Activated T-helper 1 cell treated with anti-CD3 and anti-CD28 coated beads, Interleukin-12 subunit alpha, Interleukin-12 subunit beta, Interleukin-2, Interleukin-4 antibody, amounts not matched to agents 30 ng/mL and 10 ng/mL and 1 ng/mL, durations not matched to agents 14 hours and 24 hours and 36 hours (primary cell): ENCODE measurements at regions of chr19 and their contacts with region 1.

Region 1: DNA sequence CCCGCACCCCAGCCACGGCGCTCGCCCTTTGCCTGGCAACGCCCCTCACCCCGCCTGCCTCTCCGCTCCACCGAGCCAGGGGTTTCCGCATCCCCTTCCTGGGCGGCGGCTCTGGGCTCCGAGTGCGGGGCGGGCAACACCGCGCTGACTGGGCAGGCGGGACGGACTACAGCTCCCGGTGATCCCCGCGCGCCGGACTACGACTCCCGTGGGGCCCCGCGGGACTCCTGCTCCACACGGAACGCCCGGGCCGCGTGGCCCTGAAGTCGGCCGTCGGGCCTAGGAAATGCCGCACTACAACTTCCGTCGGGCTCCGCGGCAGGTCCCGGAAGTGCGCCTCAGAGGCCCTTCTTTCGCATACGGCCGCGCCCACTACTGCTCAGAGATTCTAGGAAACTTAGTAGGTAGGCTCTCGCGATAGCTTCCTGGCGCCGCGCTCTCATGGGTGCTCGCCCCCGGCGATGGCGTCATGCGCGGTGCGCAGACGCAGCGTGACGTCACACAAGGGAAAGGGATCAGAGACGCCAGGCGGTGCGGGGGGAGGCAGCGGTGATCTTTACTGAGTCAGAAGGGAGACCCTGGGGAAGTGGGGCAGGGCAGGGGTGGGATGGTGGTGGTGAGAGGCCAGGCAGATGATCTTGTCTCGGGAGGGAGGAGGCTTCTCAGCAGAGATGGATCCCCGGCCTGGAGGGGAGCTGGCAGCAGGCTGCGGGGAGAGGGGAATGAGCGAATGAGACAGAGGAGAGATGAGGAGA is at the start of gene JOSD2:
- DNase-seq: peak; percentile 97
- H3K4me3 Mint-ChIP-seq: peak within 1 kb of the TSS; percentile 96
- H3K27ac Mint-ChIP-seq: peak within 1 kb of the TSS; percentile 99
- H3K4me1 Mint-ChIP-seq: peaks cover 18% of the 10 kb centered on the region
- H3K27me3 Mint-ChIP-seq: peaks cover 10% of the 10 kb centered on the region
- total RNA-seq, gene JOSD2: 38.5 and 41.7 TPM in 2 replicates

Region 2: GRCh38 chr19:50376166-50377050 is 134.8 kb before region 1 on chr19 and contains the start of gene NR1H2:
- intact Hi-C with region 1: loop called (anchors 1 kb)
- DNase-seq: peak; percentile 93
- H3K4me3 Mint-ChIP-seq: peak within 1 kb of the TSS; percentile 100
- H3K27ac Mint-ChIP-seq: peak within 1 kb of the TSS; percentile 99
- H3K4me1 Mint-ChIP-seq: peaks cover 27% of the 10 kb centered on the region
- H3K27me3 Mint-ChIP-seq: no peaks in the 10 kb centered on the region
- total RNA-seq, gene NR1H2: 84.3 and 84.8 TPM in 2 replicates

Region 3: DNA sequence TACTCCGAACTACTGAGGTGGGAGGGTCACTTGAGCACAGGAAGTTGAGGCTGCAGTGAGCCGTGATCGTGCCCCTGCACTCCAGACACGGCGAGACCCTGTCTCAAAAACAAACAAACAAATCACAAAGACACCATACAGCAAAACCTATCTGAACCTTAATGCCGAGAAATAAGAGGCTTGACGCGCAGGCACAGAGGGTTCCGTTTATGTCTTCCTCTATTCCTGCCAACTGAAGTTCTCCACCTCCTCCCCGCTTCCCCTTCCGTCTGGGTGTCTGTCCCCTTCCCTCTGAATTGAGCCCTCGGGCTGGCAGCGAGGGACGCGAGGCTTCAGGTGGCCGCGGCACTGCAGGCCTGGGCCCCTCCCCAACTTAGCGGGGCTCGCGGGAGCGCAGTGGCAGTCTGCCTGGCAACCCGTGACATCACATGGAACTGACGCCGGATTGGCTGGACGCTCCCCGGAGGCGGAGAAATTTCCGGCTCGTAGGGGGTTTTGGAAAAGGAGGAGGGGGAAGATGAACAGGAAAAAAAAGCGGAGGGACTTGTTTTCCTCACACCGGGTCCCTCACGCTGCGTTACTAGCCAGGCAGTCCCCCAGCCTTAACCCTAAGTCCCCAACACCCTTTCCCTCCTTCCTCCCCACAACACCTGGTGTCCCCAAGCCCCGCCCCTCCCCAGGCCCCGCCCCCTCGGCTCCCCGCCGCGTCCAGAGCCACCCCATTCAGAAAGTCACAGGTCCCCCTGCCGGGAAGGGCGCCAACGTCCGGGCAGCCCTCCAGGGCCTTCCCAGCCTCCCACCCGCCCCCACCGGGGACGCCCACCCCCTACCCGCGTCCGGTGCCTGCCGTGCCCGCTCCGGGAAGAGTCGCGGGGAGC is 79.7 kb before region 1 on chr19:
- intact Hi-C with region 1: loop called (anchors 2 kb)
- DNase-seq: peak; percentile 88
- H3K4me3 Mint-ChIP-seq: peak overlapping the region; percentile 89
- H3K27ac Mint-ChIP-seq: peak overlapping the region; percentile 93
- H3K4me1 Mint-ChIP-seq: peaks cover 12% of the 10 kb centered on the region
- H3K27me3 Mint-ChIP-seq: peaks cover 13% of the 10 kb centered on the region

Region 4: GRCh38 chr19:50657712-50658440 is 146.6 kb after region 1 on chr19:
- intact Hi-C with region 1: loop called (anchors 1 kb)
- DNase-seq: peak; percentile 69
- H3K4me3 Mint-ChIP-seq: peak overlapping the region; percentile 78
- H3K27ac Mint-ChIP-seq: peak overlapping the region; percentile 87
- H3K4me1 Mint-ChIP-seq: peaks cover 15% of the 10 kb centered on the region
- H3K27me3 Mint-ChIP-seq: peaks cover 24% of the 10 kb centered on the region

Region 5: DNA sequence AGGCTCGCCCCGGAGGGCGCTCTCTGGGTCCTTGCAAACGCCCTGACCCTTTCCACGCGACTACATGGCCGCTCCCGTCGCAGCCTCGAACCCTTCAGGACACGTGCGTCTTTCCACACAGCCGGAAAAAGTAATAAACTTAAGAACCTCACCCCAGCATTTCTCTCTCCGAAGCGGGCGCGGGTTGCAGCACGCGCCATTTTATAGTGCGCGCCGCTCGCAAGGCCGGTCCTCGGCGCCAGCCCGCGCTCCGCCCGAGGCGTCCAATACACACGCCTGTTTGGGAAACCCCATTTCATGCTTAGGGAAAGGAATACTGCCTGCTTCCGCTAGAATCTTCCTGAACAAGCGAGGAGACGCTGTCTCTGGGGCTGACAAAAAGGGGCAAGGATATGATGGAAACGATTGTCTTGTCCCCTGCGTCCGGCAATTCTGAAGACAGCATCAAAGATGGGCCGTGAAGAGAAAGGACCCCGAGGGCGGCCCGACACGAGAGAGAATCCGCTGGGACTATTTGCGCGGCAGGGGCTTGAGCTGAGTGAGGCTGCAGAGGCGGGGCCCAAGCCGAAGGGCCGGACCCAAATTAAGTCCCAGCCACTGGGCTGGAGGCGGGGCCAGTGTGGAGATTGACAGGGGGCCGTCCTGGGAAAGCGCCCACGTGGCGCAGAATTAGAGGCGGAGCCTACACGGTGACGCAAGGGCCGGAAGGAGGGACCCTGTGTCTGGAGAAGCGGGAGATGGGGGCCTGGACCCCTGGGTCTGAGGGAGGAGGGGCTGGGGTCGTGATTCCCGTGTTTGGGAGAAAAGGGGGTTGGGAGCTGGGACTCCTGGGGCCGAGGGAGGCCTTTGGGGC is 293.4 kb after region 1 on chr19:
- intact Hi-C with region 1: loop called (anchors 1 kb)
- DNase-seq: peak; percentile 97
- H3K4me3 Mint-ChIP-seq: peak overlapping the region; percentile 96
- H3K27ac Mint-ChIP-seq: peak overlapping the region; percentile 98
- H3K4me1 Mint-ChIP-seq: peaks cover 27% of the 10 kb centered on the region
- H3K27me3 Mint-ChIP-seq: no peaks in the 10 kb centered on the region